Prostate gland (tissue), 2 donors: ENCODE measurements at regions of chr12 and their contacts with region 1.

Region 1: DNA sequence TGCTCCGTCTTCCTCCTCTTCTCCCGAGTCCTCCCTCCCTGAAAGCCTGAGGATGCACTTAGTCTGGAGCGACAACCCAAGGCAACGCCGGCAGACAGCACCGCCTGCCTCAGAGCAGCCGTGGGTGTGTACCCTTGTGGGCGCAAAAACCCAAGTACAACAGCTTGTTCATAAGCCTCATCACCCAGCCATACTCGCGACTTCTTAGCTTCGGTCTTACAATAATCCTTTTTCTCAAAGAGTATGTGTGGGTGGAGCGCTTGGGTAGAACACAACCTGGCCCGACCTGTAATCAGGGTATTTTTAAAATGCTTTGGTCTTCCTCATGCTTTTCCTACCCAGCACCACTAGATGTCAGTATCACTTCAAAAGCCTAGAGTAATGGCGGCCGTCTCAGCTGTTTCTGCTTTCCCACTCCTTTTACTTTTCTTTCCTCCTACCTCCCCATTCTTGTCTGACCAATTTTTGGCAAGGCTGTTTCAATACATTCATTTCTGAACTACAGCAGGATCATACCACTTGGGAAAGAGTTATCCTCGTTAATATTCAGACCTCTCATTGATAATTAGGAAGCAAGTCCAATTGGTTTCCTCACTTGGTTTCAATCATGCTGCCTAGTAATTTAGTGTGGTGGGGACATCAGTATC is 198.9 kb downstream of the EPS8 start:
- DNase-seq: peak; percentile 51
- H3K4me3 ChIP-seq: no peak overlapping the region
- H3K27ac ChIP-seq: no peak overlapping the region
- H3K4me1 ChIP-seq: no peaks in the 10 kb centered on the region
- H3K27me3 ChIP-seq: no peaks in the 10 kb centered on the region
- CTCF ChIP-seq: peak; percentile 83 to 91 (median 88)
- POLR2A ChIP-seq: no peak

Region 2: DNA sequence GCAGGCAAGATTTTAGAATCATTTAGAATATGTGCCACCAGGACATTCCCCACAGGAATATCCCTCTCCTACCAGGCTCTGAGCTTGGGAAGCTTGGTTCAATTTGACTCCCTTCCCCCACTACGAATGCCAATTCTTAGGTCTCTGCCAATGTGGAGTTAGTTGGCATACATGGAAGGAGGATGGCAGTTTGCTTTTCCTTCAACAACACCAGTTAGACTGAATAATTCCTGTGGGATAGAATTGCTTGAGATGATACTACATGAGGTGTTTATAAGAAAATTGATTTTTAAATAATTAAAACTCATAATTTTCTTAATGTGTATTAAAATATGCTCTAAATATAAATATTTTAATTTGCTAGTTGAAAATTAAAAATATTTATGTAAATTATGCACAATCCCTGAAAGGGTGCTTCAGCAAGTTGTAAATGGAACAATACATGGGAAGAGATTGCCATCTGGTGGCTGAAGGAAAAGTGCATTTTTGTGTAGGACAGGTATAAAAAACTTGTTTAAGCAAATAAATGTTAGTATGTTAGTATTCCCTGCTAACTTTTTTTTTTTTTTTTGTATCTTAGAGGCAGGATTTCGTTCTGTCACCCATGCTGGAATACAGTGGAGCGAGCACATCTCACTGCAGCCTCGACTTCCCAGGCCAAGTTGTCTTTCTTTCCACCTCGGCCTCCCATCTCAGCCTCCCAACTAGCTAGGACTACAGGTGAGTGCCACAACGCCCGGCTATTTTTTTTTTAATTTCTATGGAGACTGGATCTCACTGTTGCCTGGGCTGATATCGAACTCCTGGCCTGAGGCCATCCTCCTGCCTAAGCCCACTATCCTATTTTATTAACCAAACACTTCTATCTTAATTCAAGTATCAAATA is 266.0 kb after region 1 on chr12:
- intact Hi-C with region 1: loop called (anchors 1 kb)
- DNase-seq: peak; percentile 57
- H3K4me3 ChIP-seq: no peak overlapping the region
- H3K27ac ChIP-seq: no peak overlapping the region
- H3K4me1 ChIP-seq: no peaks in the 10 kb centered on the region
- H3K27me3 ChIP-seq: no peaks in the 10 kb centered on the region
- CTCF ChIP-seq: peak; percentile 62 to 95 (median 81)
- POLR2A ChIP-seq: no peak